Left colon (tissue), 2 donors: ENCODE measurements at regions of chr4 and their contacts with region 1.

Region 1: DNA sequence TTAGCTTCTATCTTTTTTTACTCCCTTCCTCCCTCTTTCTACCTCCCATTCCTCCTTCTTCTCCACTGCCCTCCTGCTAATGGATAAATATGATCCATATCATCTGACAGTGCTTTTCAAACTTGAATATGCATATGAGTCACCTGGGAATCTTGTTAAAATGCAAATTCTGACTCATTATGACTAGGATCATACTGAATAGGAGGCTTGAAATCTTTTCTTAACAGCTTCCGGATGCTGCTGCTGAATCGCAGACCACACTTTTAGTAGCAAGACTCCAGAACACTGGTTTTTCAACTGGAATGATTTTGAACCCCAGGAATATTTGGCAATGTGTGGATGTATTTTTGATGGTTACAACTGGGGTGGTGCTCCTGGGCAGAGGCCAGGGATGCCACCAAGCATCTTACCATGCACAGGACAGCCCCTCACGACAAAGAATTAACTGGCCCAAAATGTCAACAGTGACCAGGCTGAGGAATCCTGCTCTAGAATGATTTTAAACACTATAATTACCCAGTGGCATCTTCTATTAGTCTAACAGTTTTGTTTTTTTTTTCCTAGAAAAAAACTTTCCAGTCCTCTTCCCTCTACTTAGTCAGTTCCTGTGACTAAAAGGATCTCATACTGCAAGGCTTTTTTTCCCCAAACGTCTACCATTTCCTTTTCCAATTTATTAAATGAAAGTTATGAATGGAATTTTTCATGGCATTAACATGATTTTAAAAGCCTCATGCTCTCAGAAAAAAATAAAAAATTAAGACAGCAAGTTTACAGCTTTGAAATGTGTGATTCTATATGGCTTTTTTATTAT is 10.6 kb upstream of the PYURF start:
- DNase-seq: no peak
- ATAC-seq: no peak

Region 2: GRCh38 chr4:88352062-88352740 is 181.9 kb before region 1 on chr4:
- intact Hi-C with region 1: no loop called
- DNase-seq: no peak
- ATAC-seq: no peak

Region 3: GRCh38 chr4:88646528-88647280 is 112.6 kb after region 1 on chr4:
- intact Hi-C with region 1: no loop called
- DNase-seq: no peak
- ATAC-seq: no peak

Region 4: DNA sequence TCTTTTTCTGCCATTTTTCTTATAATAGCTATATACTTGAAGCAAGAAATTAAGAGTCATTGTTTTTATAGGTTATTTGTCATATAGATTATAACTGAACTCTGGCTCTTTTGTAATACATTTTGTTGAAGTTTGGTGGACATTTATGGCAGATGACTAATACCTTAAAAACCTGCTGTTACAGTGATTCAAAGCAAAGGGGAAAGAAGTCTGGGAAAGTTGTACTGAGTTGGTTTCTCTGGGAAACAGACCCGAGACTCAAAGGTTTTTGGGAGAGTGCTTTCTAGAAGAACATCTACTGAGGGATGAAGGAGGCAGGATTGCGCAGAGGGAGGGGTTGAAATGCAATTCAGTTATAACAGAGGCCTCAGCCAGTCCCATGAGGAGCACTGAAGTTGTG is 127.6 kb after region 1 on chr4:
- intact Hi-C with region 1: loop called in 1 of 2 experiments (anchors 5 kb)
- DNase-seq: no peak
- ATAC-seq: no peak

Region 5: GRCh38 chr4:89024051-89024675 is 490.0 kb after region 1 on chr4:
- intact Hi-C with region 1: loop called in 1 of 2 experiments (anchors 10 kb)
- DNase-seq: peak; percentile 41 to 57
- ATAC-seq: peak; percentile 97